Dendritic cell treated with granulocyte-macrophage colony-stimulating factor and Interleukin-4, amounts not matched to agents 40 ng/mL and 50 ng/mL, for 4 days (primary cell): ENCODE measurements at regions of chr4 and their contacts with region 1.

Region 1: GRCh38 chr4:40587823-40588222 is 41.8 kb downstream of the RBM47 start:
- H3K4me3 Mint-ChIP-seq: peak overlapping the region; percentile 44
- H3K27ac Mint-ChIP-seq: peak overlapping the region; percentile 95
- H3K4me1 Mint-ChIP-seq: peaks cover 81% of the 10 kb centered on the region
- H3K27me3 Mint-ChIP-seq: no peaks in the 10 kb centered on the region

Region 2: GRCh38 chr4:40621592-40622512 is 34.0 kb after region 1 on chr4:
- intact Hi-C with region 1: loop called (anchors 5 kb)
- H3K4me3 Mint-ChIP-seq: peak overlapping the region; percentile 57
- H3K27ac Mint-ChIP-seq: peak overlapping the region; percentile 85
- H3K4me1 Mint-ChIP-seq: peaks cover 82% of the 10 kb centered on the region
- H3K27me3 Mint-ChIP-seq: no peaks in the 10 kb centered on the region